Astrocyte of the cerebellum (primary cell): ENCODE measurements at regions of chr22 and their contacts with region 1.

Region 1: GRCh38 chr22:41713004-41713403 is 13.7 kb downstream of the MEI1 start:
- DNase-seq: no peak
- H3K4me3 ChIP-seq: no peak overlapping the region
- CTCF ChIP-seq: no peak

Region 2: GRCh38 chr22:41341990-41342389 is 371.0 kb before region 1 on chr22:
- in situ Hi-C with region 1: no loop called
- DNase-seq: no peak
- H3K4me3 ChIP-seq: no peak overlapping the region
- CTCF ChIP-seq: no peak

Region 3: GRCh38 chr22:41762980-41763779 is 50.2 kb after region 1 on chr22:
- in situ Hi-C with region 1: no loop called
- DNase-seq: no peak
- H3K4me3 ChIP-seq: no peak overlapping the region
- CTCF ChIP-seq: peak; percentile 37

Region 4: DNA sequence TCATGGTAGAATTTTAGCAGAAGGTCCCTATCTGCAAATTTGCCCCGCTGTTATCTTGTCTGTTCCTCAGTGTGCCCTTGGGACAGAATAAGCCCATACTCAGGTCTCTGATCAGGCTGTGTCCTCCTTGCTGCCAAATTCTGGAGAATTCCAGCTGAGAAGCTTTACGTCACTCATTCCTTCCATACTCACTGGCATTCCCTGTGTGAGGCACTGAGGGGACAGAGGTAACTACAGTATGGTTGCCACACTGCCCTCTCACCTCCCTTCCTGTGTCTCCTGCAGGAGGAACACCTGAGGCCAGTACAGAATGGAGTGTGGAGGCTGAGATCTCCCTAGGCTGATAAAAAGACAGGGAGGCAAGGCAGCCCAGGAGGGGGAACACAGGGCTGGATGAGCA is 170.4 kb after region 1 on chr22:
- in situ Hi-C with region 1: loop called (anchors 5 kb)
- DNase-seq: no peak
- H3K4me3 ChIP-seq: no peak overlapping the region
- CTCF ChIP-seq: no peak